ENCODE measurements at regions of chr9 and their contacts with region 1.

Region 1: DNA sequence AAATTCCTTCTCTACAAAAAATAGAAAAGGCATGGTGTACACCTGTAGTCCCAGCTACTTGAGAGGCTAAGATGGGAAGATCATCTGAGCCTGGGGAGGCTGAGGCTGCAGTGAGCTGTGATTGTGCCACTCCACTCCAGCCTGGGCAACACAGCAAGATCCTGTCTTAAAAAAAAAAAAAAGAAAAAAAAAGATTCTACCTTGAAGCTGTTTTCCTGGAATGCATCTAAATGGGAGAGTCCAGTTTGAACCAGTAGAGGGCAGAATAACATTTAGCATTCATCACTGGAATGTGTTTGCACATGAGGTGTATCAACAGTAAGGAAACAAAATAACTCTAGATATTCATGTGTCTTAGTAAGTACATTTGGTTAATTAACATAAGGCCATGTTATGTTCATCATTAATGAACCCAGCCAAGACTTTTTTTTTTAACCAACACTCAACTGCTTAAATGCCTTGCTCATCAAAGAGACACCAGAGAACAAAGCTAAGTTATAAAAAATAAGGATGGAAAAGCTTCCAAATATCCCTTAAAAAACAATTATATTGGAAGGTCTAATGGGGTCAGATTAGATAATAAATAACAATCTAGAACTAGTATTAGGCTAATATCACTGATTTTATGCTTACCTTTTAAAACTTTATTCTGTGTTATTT is 16.1 kb downstream of the IFNE start:
- DNase-seq: peak; percentile 57 to 76 (median 72)
- H3K4me3 ChIP-seq: no peak overlapping the region
- H3K27ac ChIP-seq: no peak overlapping the region
- H3K4me1 ChIP-seq: no peaks in the 10 kb centered on the region
- H3K27me3 ChIP-seq: no peaks in the 10 kb centered on the region

Region 2: GRCh38 chr9:21477466-21477865 is 11.5 kb after region 1 on chr9:
- CTCF ChIA-PET with region 1: interaction called, 12 read pairs
- POLR2A ChIA-PET with region 1: no interaction called
- DNase-seq: no peak
- H3K4me3 ChIP-seq: no peak overlapping the region
- H3K27ac ChIP-seq: no peak overlapping the region
- H3K4me1 ChIP-seq: peaks cover 0 to 8% (median 3%) of the 10 kb centered on the region in 4 experiments
- H3K27me3 ChIP-seq: no peaks in the 10 kb centered on the region

Measured in common myeloid progenitor, CD34-positive (primary cell).